ENCODE measurements at regions of chr5 and their contacts with region 1.

Region 1: GRCh38 chr5:43099615-43100014 is 21.1 kb upstream of the ZNF131 start:
- DNase-seq: no peak
- H3K4me3 ChIP-seq: no peak overlapping the region
- H3K27ac ChIP-seq: no peak overlapping the region
- H3K4me1 ChIP-seq: no peaks in the 10 kb centered on the region
- H3K27me3 ChIP-seq: no peaks in the 10 kb centered on the region
- CTCF ChIP-seq: no peak

Region 2: DNA sequence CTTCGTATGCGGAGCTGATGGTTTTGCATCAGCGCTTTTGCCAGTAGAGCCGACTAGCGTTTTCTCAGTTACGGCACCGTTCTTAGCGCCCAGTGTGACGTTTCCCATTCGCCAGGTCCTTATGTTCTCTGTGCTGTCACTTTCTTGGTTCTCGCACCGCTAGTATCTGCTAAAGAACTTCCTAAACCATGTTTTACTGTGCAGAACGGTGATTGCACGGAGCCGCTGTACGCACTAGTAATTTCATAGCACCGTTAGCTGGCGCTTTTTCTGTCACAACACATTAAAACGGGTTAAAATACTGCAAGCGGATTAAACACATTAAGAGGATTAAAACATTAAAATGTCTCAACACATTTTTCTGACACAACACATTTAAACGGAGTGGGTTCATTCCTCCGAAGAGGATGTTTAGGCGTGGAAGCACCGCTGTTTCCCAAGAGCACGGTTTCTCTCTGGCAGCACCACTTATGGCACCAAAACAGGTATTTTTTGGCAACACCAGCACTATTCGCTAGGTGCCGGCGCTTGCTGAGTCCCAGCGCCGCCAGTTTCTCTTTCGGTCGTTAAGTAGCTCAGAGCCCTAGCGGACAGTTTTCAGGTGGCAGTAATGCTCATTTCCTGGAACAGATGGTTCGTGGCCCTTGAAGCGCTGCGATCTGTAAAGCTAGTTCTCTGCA is 79.9 kb before region 1 on chr5:
- CTCF ChIA-PET with region 1: no interaction called
- dilution Hi-C with region 1: loop called (anchors 5 kb)
- in situ Hi-C with region 1: no loop called
- intact Hi-C with region 1: no loop called
- DNase-seq: no peak
- H3K4me3 ChIP-seq: no peak overlapping the region
- H3K27ac ChIP-seq: no peak overlapping the region
- H3K4me1 ChIP-seq: no peaks in the 10 kb centered on the region
- H3K27me3 ChIP-seq: no peaks in the 10 kb centered on the region
- CTCF ChIP-seq: no peak